ENCODE measurements at regions of chr3 and their contacts with region 1.

Region 1: DNA sequence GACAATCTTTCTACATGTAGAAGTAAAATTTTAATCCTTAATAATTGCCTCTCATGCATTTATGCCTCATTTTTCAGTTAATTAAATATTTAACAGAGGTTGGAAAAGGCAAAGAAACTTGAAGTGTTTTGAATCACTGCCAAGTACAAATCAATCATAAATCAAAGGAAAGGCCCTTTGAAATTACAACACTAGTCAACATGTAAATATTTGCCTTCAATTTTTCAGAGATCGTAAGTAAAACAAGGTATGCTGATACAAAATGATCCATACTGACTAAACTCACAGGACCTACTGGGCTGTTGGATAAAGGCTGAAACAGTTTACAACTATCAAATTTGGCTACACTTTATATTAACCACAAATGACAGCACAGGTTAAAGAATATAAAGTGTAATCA is 33.9 kb downstream of the ZBBX start:
- DNase-seq: no peak
- ATAC-seq: no peak
- H3K4me3 ChIP-seq: no peak overlapping the region
- H3K27ac ChIP-seq: no peak overlapping the region
- H3K4me1 ChIP-seq: no peaks in the 10 kb centered on the region
- H3K27me3 ChIP-seq: no peaks in the 10 kb centered on the region
- CTCF ChIP-seq: no peak

Region 2: DNA sequence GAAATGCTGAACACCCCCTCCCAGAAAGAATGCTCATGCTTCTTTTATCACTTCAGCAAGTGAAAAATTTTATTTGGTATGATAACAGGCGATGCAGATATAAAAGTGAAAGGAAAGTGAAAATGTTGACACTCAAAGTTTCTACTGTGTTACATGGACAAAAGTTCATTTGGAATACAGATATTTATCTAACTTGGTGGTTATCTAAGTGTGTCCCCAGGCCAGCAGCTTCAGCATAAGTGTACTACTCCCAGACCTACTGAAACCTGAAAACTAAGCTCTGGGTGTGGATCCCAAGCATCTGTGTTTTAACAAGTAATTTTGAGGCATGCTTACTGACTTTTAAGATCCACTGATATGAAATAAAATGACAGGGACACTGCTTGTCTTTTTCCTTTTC is 1351.9 kb before region 1 on chr3:
- intact Hi-C with region 1: loop called (anchors 10 kb)
- DNase-seq: no peak
- ATAC-seq: no peak
- H3K4me3 ChIP-seq: no peak overlapping the region
- H3K27ac ChIP-seq: no peak overlapping the region
- H3K4me1 ChIP-seq: no peaks in the 10 kb centered on the region
- H3K27me3 ChIP-seq: no peaks in the 10 kb centered on the region
- CTCF ChIP-seq: no peak

Region 3: GRCh38 chr3:166934879-166935278 is 411.3 kb before region 1 on chr3:
- intact Hi-C with region 1: no loop called
- DNase-seq: no peak
- ATAC-seq: no peak
- H3K4me3 ChIP-seq: no peak overlapping the region
- H3K27ac ChIP-seq: no peak overlapping the region
- H3K4me1 ChIP-seq: no peaks in the 10 kb centered on the region
- H3K27me3 ChIP-seq: no peaks in the 10 kb centered on the region
- CTCF ChIP-seq: no peak

Region 4: GRCh38 chr3:167091226-167091625 is 254.9 kb before region 1 on chr3:
- intact Hi-C with region 1: no loop called
- DNase-seq: no peak
- ATAC-seq: no peak
- H3K4me3 ChIP-seq: no peak overlapping the region
- H3K27ac ChIP-seq: no peak overlapping the region
- H3K4me1 ChIP-seq: no peaks in the 10 kb centered on the region
- H3K27me3 ChIP-seq: no peaks in the 10 kb centered on the region
- CTCF ChIP-seq: no peak

Region 5: DNA sequence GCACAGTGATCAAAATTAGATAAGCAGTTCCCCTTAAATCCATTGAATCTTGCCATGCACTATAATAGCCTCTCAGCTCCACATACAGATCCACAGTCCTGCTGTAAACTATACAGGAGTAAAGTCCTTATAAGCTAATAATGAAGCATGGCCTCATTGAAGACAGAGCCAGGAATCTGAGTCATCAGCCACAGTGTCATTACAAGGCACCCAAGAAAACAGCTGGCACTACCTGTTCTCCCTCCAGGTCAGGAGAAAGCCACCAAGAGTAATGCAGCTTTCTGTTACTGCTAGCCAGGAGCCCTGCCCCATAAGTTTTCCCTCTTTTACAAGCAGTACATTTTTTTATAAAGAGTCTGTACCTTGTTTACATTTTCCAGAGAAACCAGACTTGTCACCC is 280.3 kb after region 1 on chr3:
- intact Hi-C with region 1: no loop called
- DNase-seq: no peak
- ATAC-seq: no peak
- H3K4me3 ChIP-seq: no peak overlapping the region
- H3K27ac ChIP-seq: no peak overlapping the region
- H3K4me1 ChIP-seq: no peaks in the 10 kb centered on the region
- H3K27me3 ChIP-seq: no peaks in the 10 kb centered on the region
- CTCF ChIP-seq: no peak

Region 6: DNA sequence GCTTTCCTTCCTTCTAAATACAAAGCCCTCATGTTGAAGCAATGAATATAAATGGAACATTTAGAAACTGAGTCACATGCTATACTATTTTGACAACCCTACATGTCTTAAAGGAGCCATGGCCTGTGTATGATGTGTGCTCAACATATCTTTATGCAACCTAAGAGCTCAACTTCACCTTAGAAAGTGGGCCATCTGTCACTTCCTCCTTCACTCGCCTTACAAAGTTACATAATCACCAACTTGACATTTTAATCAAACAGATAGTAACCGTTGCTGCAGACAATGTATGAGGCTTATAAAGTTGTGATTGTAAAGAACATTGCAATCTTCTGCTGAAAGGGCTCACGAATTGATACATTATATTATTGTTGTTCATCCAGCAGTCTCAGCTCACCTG is 552.9 kb after region 1 on chr3:
- intact Hi-C with region 1: no loop called
- DNase-seq: no peak
- ATAC-seq: no peak
- H3K4me3 ChIP-seq: no peak overlapping the region
- H3K27ac ChIP-seq: no peak overlapping the region
- H3K4me1 ChIP-seq: no peaks in the 10 kb centered on the region
- H3K27me3 ChIP-seq: no peaks in the 10 kb centered on the region
- CTCF ChIP-seq: no peak